CD4-positive, alpha-beta T cell (primary cell): ENCODE measurements at regions of chr6 and their contacts with region 1.

Region 1: DNA sequence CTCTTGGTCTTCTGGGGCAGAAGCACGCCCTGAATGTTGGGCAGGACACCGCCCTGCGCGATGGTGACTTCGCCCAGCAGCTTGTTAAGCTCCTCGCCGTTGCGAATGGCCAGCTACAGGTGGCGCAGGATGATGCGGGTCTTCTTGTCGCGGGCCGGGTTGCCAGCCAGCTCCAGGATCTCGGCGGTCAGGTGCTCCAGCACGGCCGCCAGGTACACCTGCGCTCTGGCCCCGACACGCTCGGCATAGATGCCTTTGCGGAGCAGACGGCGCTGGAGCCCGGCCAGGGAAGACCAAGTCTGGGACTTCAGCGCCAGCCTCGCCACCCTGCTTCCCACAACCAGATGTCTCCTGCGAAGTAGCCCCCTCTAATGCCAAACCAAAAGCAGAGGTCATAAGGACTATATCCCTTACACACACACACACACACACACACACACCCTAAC is 8.0 kb upstream of the SLC17A3 start:
- DNase-seq: peak in 13 of 14 experiments; percentile 4 to 82 (median 26)
- ATAC-seq: peak; percentile 87
- H3K4me3 ChIP-seq: no peak overlapping the region
- H3K4me3 Mint-ChIP-seq: peak overlapping the region; percentile 90
- H3K27ac ChIP-seq: no peak overlapping the region
- H3K27ac Mint-ChIP-seq: peak overlapping the region; percentile 83
- H3K4me1 ChIP-seq: no peaks in the 10 kb centered on the region
- H3K4me1 Mint-ChIP-seq: peaks cover 4% of the 10 kb centered on the region
- H3K27me3 ChIP-seq: no peaks in the 10 kb centered on the region
- H3K27me3 Mint-ChIP-seq: peaks cover 5% of the 10 kb centered on the region
- CTCF ChIP-seq: peak; percentile 44

Region 2: DNA sequence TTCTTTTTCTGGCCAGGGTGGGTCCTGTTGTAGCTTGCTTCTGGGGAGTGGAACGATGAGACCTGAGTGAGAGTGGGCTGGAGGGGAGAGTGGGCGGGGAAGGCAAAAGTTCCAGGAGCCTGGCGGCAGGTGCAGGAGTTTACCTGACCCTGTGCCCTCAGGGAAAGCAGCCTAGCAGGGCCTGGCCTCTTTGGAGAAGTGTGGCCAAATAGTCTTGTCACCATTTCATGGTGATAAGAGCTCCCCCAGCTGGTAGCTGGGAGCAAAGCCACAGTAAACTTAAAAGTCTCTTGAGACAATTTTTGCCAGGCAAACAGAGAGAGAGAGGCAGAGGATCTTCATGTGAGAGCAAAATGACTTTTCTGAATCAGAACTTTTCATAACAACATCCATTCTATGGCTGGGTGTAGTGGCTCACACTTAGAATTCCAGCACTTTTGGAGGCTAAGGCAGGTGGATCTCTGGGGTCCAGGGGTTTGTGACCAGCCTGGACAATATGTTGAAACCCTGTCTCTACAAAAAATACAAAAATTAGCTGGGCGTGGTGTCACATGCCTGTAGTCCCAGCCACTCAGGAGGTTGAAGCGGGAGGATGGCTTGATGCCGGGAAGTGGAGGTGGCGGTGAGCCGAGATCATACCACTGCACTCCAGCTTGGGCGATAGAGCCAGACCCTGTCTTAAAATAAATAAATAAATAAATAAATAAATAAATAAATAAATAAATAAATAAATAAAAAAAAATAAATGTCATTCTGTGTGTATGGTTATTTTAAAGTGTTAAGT is 391.9 kb before region 1 on chr6:
- CTCF ChIA-PET with region 1: no interaction called
- POLR2A ChIA-PET with region 1: no interaction called
- intact Hi-C with region 1: no loop called
- DNase-seq: peak; percentile 39 to 82 (median 58)
- ATAC-seq: peak; percentile 82
- H3K4me3 ChIP-seq: no peak overlapping the region
- H3K4me3 Mint-ChIP-seq: no peak overlapping the region
- H3K27ac ChIP-seq: no peak overlapping the region
- H3K27ac Mint-ChIP-seq: peak overlapping the region; percentile 8
- H3K4me1 ChIP-seq: peaks cover 7% of the 10 kb centered on the region
- H3K4me1 Mint-ChIP-seq: peaks cover 8% of the 10 kb centered on the region
- H3K27me3 ChIP-seq: no peaks in the 10 kb centered on the region
- H3K27me3 Mint-ChIP-seq: no peaks in the 10 kb centered on the region
- CTCF ChIP-seq: peak; percentile 88

Region 3: DNA sequence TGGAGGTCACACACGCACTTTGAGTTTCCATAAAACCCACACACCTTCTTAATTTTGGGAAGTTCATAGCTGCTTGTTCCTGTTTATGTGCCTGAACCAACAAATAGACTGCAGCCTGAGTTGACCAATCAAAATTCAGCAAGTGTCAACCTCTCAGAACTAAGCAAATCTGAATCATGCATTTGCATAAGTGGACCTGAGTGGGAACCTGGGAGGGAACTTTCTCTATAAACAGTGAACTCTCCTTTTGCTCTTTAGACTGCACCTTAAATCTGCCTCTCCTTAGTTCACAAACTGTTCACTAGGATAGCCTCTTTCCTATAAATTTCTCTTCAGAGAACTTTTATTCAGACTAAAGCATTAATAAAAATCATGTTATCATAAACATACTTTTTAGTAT is 88.1 kb before region 1 on chr6:
- CTCF ChIA-PET with region 1: interaction called, 3 read pairs
- POLR2A ChIA-PET with region 1: no interaction called
- intact Hi-C with region 1: loop called (anchors 5 kb)
- DNase-seq: no peak
- ATAC-seq: no peak
- H3K4me3 ChIP-seq: no peak overlapping the region
- H3K4me3 Mint-ChIP-seq: no peak overlapping the region
- H3K27ac ChIP-seq: no peak overlapping the region
- H3K27ac Mint-ChIP-seq: no peak overlapping the region
- H3K4me1 ChIP-seq: no peaks in the 10 kb centered on the region
- H3K4me1 Mint-ChIP-seq: no peaks in the 10 kb centered on the region
- H3K27me3 ChIP-seq: no peaks in the 10 kb centered on the region
- H3K27me3 Mint-ChIP-seq: peaks cover 6% of the 10 kb centered on the region
- CTCF ChIP-seq: no peak

Region 4: GRCh38 chr6:25866011-25866410 is 16.1 kb before region 1 on chr6:
- CTCF ChIA-PET with region 1: interaction called, 4 read pairs
- POLR2A ChIA-PET with region 1: interaction called, 12 read pairs
- intact Hi-C with region 1: no loop called
- DNase-seq: peak in 9 of 14 experiments; percentile 0 to 88 (median 14)
- ATAC-seq: peak; percentile 93
- H3K4me3 ChIP-seq: no peak overlapping the region
- H3K4me3 Mint-ChIP-seq: peak overlapping the region; percentile 42
- H3K27ac ChIP-seq: peak overlapping the region in 1 of 2 donors; percentile 46
- H3K27ac Mint-ChIP-seq: peak overlapping the region; percentile 78
- H3K4me1 ChIP-seq: peaks cover 12% of the 10 kb centered on the region
- H3K4me1 Mint-ChIP-seq: peaks cover 33% of the 10 kb centered on the region
- H3K27me3 ChIP-seq: no peaks in the 10 kb centered on the region
- H3K27me3 Mint-ChIP-seq: no peaks in the 10 kb centered on the region
- CTCF ChIP-seq: no peak